ENCODE measurements at regions of chr2 and their contacts with region 1.

Region 1: DNA sequence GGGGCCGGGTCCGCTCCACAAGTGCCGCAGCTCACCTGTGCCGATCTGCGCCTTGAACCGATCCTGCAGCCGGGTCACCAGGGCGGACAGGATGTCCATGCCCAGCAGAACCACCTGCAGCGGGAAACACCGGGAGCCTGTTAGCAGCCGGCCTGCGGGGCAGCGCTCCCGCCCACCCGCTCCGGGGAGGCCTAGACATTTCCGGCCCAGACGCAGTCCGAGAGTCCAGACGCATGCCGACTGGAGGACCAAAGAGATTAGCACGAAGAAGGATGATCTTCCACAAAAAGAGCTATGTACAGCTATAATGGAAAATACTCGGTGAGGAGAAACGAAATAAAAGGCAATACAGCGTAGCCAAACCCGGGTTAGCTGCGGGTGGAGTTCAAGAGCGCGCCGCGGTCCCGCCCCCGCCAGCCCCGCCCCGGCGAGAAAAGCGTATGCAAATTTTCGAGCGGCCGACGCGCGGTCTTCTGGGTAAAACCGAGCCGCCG is 421 bp upstream of the RNU4ATAC start:
- DNase-seq: peak; percentile 71
- ATAC-seq: peak; percentile 68
- H3K4me3 ChIP-seq: peak overlapping the region; percentile 94
- H3K27ac ChIP-seq: peak overlapping the region; percentile 99
- H3K4me1 ChIP-seq: peaks cover 29% of the 10 kb centered on the region
- H3K27me3 ChIP-seq: no peaks in the 10 kb centered on the region
- CTCF ChIP-seq: no peak

Region 2: DNA sequence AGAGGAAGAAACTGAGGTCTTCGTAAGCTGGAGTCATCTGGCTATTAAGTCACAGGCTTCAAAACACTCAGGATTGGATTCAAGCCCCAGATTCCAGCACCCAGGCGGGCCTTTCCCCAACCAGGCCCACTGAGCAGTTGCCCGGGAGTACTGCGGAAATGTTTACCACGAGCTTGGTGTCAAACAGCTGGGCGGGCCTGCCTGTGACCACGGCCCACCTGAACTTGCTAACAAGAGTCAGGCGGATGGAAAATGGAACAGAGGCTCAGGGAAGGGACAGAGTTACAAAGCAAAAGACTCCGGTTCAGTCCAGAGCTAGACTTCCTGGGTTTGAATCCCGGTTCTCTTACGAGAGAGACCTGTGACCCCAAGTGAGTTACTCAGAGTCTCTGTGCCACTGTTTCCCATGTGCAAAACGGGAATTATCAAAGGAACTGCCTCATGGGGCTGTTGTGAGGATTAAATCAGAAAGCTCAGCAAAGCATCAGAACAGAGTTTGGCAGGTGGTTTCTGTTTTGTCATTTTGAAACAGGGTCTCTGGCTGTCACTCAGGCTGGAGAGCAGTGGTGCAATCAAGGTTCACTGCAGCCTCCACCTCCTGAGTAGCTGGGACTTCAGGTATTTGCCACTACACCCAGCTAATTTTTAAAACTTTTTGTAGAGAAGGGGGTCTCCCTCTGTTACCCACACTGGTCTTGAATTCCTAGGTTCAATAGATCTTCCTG is 196.3 kb before region 1 on chr2:
- CTCF ChIA-PET with region 1: no interaction called
- POLR2A ChIA-PET with region 1: no interaction called
- intact Hi-C with region 1: no loop called
- DNase-seq: no peak
- ATAC-seq: no peak
- H3K4me3 ChIP-seq: no peak overlapping the region
- H3K27ac ChIP-seq: no peak overlapping the region
- H3K4me1 ChIP-seq: no peaks in the 10 kb centered on the region
- H3K27me3 ChIP-seq: no peaks in the 10 kb centered on the region
- CTCF ChIP-seq: no peak

Region 3: GRCh38 chr2:121356058-121356640 is 174.1 kb before region 1 on chr2:
- CTCF ChIA-PET with region 1: no interaction called
- POLR2A ChIA-PET with region 1: interaction called, 10 read pairs
- intact Hi-C with region 1: no loop called
- DNase-seq: peak; percentile 91
- ATAC-seq: peak; percentile 39
- H3K4me3 ChIP-seq: no peak overlapping the region
- H3K27ac ChIP-seq: peak overlapping the region; percentile 45
- H3K4me1 ChIP-seq: peaks cover 49% of the 10 kb centered on the region
- H3K27me3 ChIP-seq: no peaks in the 10 kb centered on the region
- CTCF ChIP-seq: peak; percentile 86

Region 4: DNA sequence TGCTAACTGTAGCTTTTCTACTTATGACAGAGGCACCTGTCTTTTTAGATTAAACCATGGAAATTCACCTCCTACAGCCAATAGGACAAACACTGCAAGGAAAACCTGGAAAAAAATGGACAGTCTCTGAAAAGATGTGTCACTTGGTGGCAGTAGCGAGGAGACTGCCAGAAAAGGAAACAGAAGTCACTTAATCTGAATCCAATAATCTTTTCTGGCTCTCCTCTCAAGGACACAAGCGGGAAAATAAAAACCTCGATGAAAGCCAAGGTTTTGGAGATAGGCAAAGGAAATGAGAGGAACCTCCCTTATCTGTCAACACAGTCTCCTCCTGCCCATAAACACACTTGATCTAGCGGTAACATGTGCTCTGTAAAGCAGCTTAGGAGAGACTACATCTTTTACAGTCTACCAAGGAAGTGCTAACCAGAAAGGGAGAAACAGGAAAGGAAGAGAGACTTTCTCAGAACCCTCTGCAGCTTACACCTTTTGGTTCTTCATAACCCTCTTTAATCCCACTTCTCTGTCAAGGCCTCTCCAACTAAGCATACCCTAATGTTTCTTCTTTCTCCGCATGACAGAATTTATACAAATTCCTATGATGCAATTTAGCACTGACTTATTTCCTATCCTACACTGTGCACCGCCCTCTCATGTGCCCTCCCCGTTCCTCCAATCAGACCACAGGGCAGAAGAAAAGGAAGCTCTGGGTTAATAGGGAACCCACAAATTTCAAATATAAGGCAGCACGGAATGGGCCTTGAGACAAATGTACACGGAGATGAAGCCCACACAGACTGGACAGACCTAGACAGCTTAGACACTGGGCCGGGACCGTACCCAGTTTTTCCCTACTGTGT is 66.2 kb after region 1 on chr2:
- CTCF ChIA-PET with region 1: interaction called, 3 read pairs
- POLR2A ChIA-PET with region 1: interaction called, 5 read pairs
- intact Hi-C with region 1: loop called (anchors 2 kb)
- DNase-seq: peak; percentile 74
- ATAC-seq: peak; percentile 68
- H3K4me3 ChIP-seq: peak overlapping the region; percentile 39
- H3K27ac ChIP-seq: peak overlapping the region; percentile 48
- H3K4me1 ChIP-seq: peaks cover 32% of the 10 kb centered on the region
- H3K27me3 ChIP-seq: no peaks in the 10 kb centered on the region
- CTCF ChIP-seq: peak; percentile 86

Region 5: GRCh38 chr2:121649596-121650314 is 119.5 kb after region 1 on chr2:
- CTCF ChIA-PET with region 1: interaction called, 7 read pairs
- POLR2A ChIA-PET with region 1: interaction called, 6 read pairs
- intact Hi-C with region 1: loop called (anchors 1 kb)
- DNase-seq: peak; percentile 96
- ATAC-seq: peak; percentile 90
- H3K4me3 ChIP-seq: peak overlapping the region; percentile 87
- H3K27ac ChIP-seq: peak overlapping the region; percentile 85
- H3K4me1 ChIP-seq: peaks cover 21% of the 10 kb centered on the region
- H3K27me3 ChIP-seq: no peaks in the 10 kb centered on the region
- CTCF ChIP-seq: no peak

Region 6: GRCh38 chr2:121736462-121737341 is 206.4 kb after region 1 on chr2 and contains the start of gene NIFK:
- CTCF ChIA-PET with region 1: no interaction called
- POLR2A ChIA-PET with region 1: no interaction called
- intact Hi-C with region 1: loop called (anchors 1 kb)
- DNase-seq: peak; percentile 96
- ATAC-seq: peak; percentile 93
- H3K4me3 ChIP-seq: peak within 1 kb of the TSS; percentile 100
- H3K27ac ChIP-seq: peak within 1 kb of the TSS; percentile 68
- H3K4me1 ChIP-seq: peaks cover 9% of the 10 kb centered on the region
- H3K27me3 ChIP-seq: no peaks in the 10 kb centered on the region
- CTCF ChIP-seq: no peak
- total RNA-seq, gene NIFK: 42.1 and 64.1 TPM in 2 replicates